Gastrocnemius medialis (tissue), 4 donors: ENCODE measurements at regions of chr9 and their contacts with region 1.

Region 1: DNA sequence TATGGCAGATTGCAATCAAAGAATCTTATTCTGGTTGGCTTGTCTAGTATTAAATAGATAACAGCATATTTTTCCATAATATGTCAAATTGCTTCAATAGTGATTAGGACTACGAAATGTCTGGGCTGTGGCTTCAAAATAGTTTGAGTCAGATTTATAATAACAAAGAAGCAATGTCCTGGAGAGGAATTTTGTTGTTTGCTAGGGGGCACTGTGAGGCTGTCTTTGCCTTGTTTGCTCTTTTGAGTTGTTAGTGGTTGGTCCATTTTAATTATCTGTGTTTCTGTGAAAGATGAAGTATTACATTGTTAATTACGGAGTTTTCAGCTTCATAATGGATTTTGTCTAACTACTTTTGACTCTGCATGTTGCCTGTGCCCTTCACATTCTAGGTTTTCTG is 713.6 kb downstream of the TLE4 start:
- DNase-seq: no peak
- ATAC-seq: no peak
- H3K4me3 ChIP-seq: no peak overlapping the region
- H3K27ac ChIP-seq: no peak overlapping the region
- H3K4me1 ChIP-seq: no peaks in the 10 kb centered on the region
- H3K27me3 ChIP-seq: no peaks in the 10 kb centered on the region
- CTCF ChIP-seq: no peak
- POLR2A ChIP-seq: no peak

Region 2: GRCh38 chr9:80222466-80223169 is 62.7 kb before region 1 on chr9:
- in situ Hi-C with region 1: loop called in 1 of 4 experiments (anchors 10 kb)
- intact Hi-C with region 1: no loop called
- DNase-seq: no peak
- ATAC-seq: no peak
- H3K4me3 ChIP-seq: no peak overlapping the region
- H3K27ac ChIP-seq: no peak overlapping the region
- H3K4me1 ChIP-seq: no peaks in the 10 kb centered on the region
- H3K27me3 ChIP-seq: no peaks in the 10 kb centered on the region
- CTCF ChIP-seq: no peak
- POLR2A ChIP-seq: no peak